ENCODE measurements at regions of chr15 and their contacts with region 1.

Region 1: GRCh38 chr15:48433226-48433886 is 102.1 kb downstream of the DUT start:
- DNase-seq: peak in 6 of 7 donors; percentile 44 to 74 (median 56)
- H3K4me3 ChIP-seq: no peak overlapping the region
- H3K27ac ChIP-seq: peak overlapping the region in 3 of 5 donors; percentile 5 to 65 (median 48)
- H3K4me1 ChIP-seq: no peaks in the 10 kb centered on the region
- H3K27me3 ChIP-seq: no peaks in the 10 kb centered on the region
- CTCF ChIP-seq: no peak
- POLR2A ChIP-seq: no peak

Region 2: DNA sequence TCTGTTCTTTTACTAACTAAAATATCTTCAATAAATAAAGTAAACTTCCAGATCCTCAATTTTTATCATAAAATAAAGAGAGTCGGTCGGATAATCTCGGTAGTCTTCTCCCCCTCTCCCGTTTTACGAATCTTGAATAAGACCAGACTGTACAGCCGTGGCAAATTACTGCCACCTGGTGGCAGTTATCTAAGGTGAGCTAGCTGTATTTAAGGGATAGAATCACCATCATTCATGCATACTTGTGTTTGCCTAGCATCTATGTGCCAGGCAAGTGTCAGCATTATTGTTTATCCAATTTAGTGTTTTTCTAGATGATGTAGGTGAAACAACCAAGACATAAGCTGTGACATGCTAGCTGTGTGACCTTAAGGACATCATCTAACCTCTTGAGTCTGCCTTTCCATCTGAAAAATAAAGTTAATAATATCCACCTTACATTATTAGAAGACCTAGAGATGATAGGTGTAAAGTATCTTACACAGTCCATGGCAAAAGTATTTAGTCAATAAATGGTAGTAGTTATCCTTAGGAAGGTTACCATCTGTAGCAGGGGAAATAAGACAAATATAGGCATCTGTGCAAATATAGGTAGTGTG is 80.8 kb before region 1 on chr15:
- intact Hi-C with region 1: loop called in 1 of 2 experiments (anchors 10 kb)
- DNase-seq: peak; percentile 46 to 75 (median 59)
- H3K4me3 ChIP-seq: no peak overlapping the region
- H3K27ac ChIP-seq: no peak overlapping the region
- H3K4me1 ChIP-seq: no peaks in the 10 kb centered on the region
- H3K27me3 ChIP-seq: no peaks in the 10 kb centered on the region
- CTCF ChIP-seq: peak; percentile 44 to 79 (median 66)
- POLR2A ChIP-seq: no peak